HCT116 (cell line): ENCODE measurements at regions of chr2 and their contacts with region 1.

Region 1: GRCh38 chr2:223674998-223675609 is 72.9 kb upstream of the SCG2 start:
- DNase-seq: peak; percentile 54
- ATAC-seq: peak; percentile 87
- H3K4me3 ChIP-seq: no peak overlapping the region; a peak in 1 of 4 replicates
- H3K27ac ChIP-seq: peak overlapping the region; percentile 56
- H3K4me1 ChIP-seq: peaks cover 21 to 45% of the 10 kb centered on the region in 2 experiments
- H3K27me3 ChIP-seq: no peaks in the 10 kb centered on the region
- CTCF ChIP-seq: peak; percentile 73 to 86 (median 81)
- POLR2A ChIP-seq: no peak
- RAD21 ChIP-seq: peak; percentile 82

Region 2: DNA sequence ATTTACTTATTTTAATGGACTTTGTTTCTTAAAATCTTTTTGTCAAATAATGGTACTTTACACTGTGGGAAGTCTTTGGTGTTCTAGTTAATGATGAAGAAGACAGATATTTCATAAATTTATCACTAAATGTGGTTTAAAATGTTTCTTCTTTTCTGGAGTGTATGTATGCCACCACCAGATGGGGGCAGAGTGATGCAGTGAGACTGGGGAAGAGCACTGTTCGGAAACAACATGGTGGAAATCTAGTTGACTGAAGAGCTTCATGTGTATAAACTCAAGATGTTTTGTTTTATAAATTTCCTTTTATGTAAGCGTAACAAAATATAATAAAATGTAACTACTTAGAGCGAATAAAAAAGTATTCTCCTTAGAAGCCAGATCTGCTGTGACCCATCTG is 428.0 kb before region 1 on chr2:
- CTCF ChIA-PET with region 1: no interaction called
- POLR2A ChIA-PET with region 1: no interaction called
- RAD21 ChIA-PET with region 1: no interaction called
- intact Hi-C with region 1: loop called (anchors 5 kb)
- DNase-seq: peak; percentile 28
- ATAC-seq: peak; percentile 80
- H3K4me3 ChIP-seq: no peak overlapping the region
- H3K27ac ChIP-seq: no peak overlapping the region
- H3K4me1 ChIP-seq: no peaks in the 10 kb centered on the region
- H3K27me3 ChIP-seq: no peaks in the 10 kb centered on the region
- CTCF ChIP-seq: peak; percentile 58 to 81 (median 61); a peak in 5 of 6 replicates
- POLR2A ChIP-seq: no peak
- RAD21 ChIP-seq: peak; percentile 89

Region 3: DNA sequence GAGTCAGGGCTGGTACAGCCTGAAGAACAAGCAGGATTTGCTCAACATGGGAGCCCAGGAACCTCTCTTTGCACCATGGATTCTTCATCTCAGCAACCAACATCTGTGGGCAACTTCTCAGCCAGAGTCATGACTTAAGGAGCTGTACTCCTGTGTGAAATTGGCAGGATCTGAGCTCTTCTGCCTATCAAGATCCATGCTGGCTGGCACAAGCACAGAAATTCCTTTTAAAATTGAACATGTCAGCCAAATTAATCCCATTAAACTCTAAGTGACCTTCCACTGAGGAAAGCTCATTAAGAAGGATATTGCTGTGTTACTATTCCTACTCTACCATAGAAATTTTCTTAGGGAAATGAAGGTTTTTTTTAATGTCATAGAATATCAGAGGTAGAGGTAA is 37.5 kb after region 1 on chr2:
- CTCF ChIA-PET with region 1: no interaction called
- POLR2A ChIA-PET with region 1: no interaction called
- RAD21 ChIA-PET with region 1: no interaction called
- intact Hi-C with region 1: no loop called
- DNase-seq: no peak
- ATAC-seq: no peak
- H3K4me3 ChIP-seq: no peak overlapping the region
- H3K27ac ChIP-seq: no peak overlapping the region
- H3K4me1 ChIP-seq: peaks cover 2 to 9% of the 10 kb centered on the region in 2 experiments; a peak in 3 of 4 replicates
- H3K27me3 ChIP-seq: no peaks in the 10 kb centered on the region
- CTCF ChIP-seq: no peak
- POLR2A ChIP-seq: no peak
- RAD21 ChIP-seq: no peak